Mammary epithelial cell (primary cell): ENCODE measurements at regions of chr15 and their contacts with region 1.

Region 1: DNA sequence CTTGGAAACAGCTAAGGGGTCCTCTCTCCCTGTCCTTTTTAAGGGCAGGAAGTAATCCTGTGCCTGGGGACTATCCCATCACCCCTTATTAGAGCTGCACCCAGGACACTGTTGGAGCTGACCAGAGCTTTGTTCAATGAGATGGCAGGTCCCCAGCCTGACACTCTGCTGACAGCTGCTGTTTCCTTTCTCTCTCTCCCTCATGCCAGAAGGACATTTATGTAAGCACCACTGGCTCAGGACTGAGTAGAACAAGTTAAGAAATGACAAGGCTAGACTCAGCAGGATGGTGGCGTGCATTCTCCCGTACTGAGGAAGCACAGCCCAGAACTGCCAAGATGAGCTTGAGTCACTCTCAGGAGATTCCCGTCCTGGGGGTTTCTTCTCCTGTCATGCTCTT is 17.3 kb downstream of the GJD2 start:
- DNase-seq: peak; percentile 35
- H3K4me3 ChIP-seq: no peak overlapping the region
- H3K27ac ChIP-seq: no peak overlapping the region
- H3K4me1 ChIP-seq: peaks cover 3% of the 10 kb centered on the region
- H3K27me3 ChIP-seq: peaks cover 3% of the 10 kb centered on the region
- CTCF ChIP-seq: no peak

Region 2: DNA sequence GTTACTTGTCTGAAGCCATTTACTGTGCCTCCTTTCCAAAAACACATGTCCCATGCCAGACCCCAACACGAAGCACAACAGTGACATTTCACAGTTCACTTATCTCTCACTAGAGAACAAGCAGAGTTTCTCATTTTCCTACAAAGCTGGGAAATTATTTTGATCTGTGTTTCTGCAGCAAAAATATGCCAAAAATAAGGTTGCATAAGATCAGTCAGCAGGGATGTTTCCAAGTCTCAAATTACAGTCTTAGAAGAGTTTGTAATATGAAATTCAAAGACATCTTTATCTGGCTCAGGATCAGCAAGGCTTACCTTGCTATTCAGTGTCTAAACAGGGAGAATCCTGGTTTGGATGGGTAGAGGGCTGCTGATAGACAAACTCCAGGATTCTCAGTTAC is 58.2 kb before region 1 on chr15:
- CTCF ChIA-PET with region 1: no interaction called
- dilution Hi-C with region 1: no loop called
- in situ Hi-C with region 1: no loop called
- intact Hi-C with region 1: no loop called
- DNase-seq: no peak
- H3K4me3 ChIP-seq: no peak overlapping the region
- H3K27ac ChIP-seq: no peak overlapping the region
- H3K4me1 ChIP-seq: peaks cover 20% of the 10 kb centered on the region
- H3K27me3 ChIP-seq: no peaks in the 10 kb centered on the region
- CTCF ChIP-seq: no peak

Region 3: DNA sequence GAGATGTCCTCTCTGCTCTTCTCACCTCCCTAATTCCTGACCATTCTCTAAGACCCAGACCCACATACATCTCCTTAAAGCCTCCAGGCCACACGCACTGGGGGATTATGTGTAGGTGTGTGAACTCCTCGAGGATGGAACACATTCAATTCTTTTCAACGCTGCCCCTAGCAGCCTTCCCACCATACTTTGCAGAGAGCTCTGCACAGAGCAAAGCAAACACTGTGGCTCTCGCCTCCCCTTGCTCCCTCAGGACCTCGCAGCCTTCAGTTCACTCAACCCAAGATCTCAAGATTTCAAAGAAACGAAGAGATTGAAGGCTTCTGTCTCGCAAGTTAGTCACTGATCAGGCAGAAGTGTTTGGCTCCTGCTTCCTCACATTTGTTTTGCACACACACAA is 51.8 kb after region 1 on chr15:
- CTCF ChIA-PET with region 1: no interaction called
- dilution Hi-C with region 1: loop called (anchors 5 kb)
- in situ Hi-C with region 1: no loop called
- intact Hi-C with region 1: no loop called
- DNase-seq: no peak
- H3K4me3 ChIP-seq: no peak overlapping the region
- H3K27ac ChIP-seq: no peak overlapping the region
- H3K4me1 ChIP-seq: no peaks in the 10 kb centered on the region
- H3K27me3 ChIP-seq: peaks cover 6% of the 10 kb centered on the region
- CTCF ChIP-seq: no peak

Region 4: DNA sequence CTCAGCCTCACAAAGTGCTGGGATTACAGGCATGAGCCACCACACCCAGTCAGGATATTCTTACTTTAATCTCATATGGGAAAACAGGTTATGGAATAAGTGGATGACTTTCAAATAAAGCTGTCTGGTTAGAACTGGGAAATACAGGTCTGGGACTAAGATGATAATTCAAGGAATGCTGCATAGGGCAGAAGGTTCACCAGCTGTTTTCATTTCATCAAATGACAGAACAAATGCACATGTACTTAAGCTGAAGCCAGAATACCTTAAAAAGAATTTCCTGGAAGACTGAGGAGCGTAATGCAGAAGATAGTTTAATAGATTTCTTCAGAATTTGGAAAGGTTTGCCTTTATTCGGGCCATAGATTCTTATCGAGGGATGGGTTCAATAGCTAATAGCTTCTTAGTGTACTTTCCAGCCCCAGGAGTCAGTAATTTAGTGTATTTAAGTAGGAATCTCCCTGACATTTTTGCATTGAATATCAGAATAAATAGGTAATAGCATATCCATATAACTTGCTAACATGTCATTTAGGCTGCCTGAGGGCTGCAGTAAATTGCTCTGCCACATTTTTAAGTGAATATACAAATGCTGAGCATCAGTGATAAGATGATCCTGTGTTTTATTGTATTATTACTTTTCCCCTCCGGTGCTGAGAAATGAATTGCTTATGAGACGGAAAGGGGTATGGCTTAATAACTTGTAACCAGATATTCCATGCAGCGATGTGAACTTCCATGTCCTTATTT is 290.9 kb after region 1 on chr15:
- CTCF ChIA-PET with region 1: interaction called, 23 read pairs
- dilution Hi-C with region 1: no loop called
- in situ Hi-C with region 1: no loop called
- intact Hi-C with region 1: no loop called
- DNase-seq: no peak
- H3K4me3 ChIP-seq: no peak overlapping the region
- H3K27ac ChIP-seq: no peak overlapping the region
- H3K4me1 ChIP-seq: no peaks in the 10 kb centered on the region
- H3K27me3 ChIP-seq: no peaks in the 10 kb centered on the region
- CTCF ChIP-seq: no peak